HepG2 (cell line): ENCODE measurements at regions of chr3 and their contacts with region 1.

Region 1: GRCh38 chr3:167798443-167798842 is 62.9 kb downstream of the SERPINI1 start:
- DNase-seq: no peak
- ATAC-seq: no peak
- H3K4me3 ChIP-seq: no peak overlapping the region
- H3K27ac ChIP-seq: no peak overlapping the region
- H3K4me1 ChIP-seq: no peaks in the 10 kb centered on the region
- H3K27me3 ChIP-seq: no peaks in the 10 kb centered on the region
- CTCF ChIP-seq: no peak
- EP300 ChIP-seq: no peak
- POLR2A ChIP-seq: no peak
- RAD21 ChIP-seq: no peak

Region 2: DNA sequence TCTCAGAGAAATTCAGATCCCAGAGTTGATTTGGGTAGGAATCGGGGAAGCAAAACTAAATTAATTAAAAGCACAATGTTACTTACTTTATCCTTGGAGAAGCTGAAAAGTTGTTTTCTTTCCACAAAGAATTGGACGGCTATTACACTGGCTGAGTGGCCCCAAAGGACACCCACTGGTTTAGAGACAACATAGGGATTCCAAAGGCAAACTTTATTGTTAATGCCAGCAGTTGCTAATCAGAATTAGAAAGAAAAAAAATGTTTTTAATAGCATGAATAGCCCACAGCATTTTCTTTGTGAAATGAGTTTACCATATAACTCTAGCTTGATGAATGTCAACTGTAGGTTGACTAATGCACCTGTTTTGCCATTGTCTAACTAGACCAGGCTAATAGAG is 196.4 kb before region 1 on chr3:
- CTCF ChIA-PET with region 1: no interaction called
- POLR2A ChIA-PET with region 1: no interaction called
- in situ Hi-C with region 1: no loop called
- intact Hi-C with region 1: no loop called
- DNase-seq: no peak
- ATAC-seq: no peak
- H3K4me3 ChIP-seq: no peak overlapping the region
- H3K27ac ChIP-seq: no peak overlapping the region
- H3K4me1 ChIP-seq: no peaks in the 10 kb centered on the region
- H3K27me3 ChIP-seq: no peaks in the 10 kb centered on the region
- CTCF ChIP-seq: no peak
- EP300 ChIP-seq: no peak
- POLR2A ChIP-seq: no peak
- RAD21 ChIP-seq: no peak

Region 3: DNA sequence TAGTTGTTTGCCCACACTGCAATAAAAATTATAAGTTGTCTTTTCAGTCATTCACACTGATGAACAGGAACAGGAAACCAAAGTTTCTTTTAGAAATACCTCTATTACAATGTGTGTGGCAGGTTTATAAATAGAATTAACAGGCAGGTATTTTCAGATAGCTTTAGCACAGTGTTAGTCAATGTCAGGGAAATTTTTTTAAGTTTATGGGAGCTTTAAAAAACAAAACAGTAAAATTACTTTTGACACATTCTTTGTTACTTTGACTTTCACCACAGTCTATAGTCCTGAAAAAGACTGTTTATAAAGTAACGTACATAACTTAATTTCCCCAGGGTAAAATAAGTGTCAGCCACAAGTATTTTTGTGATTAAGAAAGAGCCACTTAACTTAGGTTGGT is 24.9 kb before region 1 on chr3:
- CTCF ChIA-PET with region 1: no interaction called
- POLR2A ChIA-PET with region 1: no interaction called
- in situ Hi-C with region 1: no loop called
- intact Hi-C with region 1: loop called (anchors 1 kb)
- DNase-seq: no peak
- ATAC-seq: no peak
- H3K4me3 ChIP-seq: no peak overlapping the region
- H3K27ac ChIP-seq: no peak overlapping the region
- H3K4me1 ChIP-seq: no peaks in the 10 kb centered on the region
- H3K27me3 ChIP-seq: no peaks in the 10 kb centered on the region
- CTCF ChIP-seq: no peak
- EP300 ChIP-seq: no peak
- POLR2A ChIP-seq: no peak
- RAD21 ChIP-seq: no peak